ENCODE measurements at regions of chrX and their contacts with region 1.

Region 1: GRCh38 chrX:65723706-65724105 is 56.3 kb downstream of the MSN start:
- DNase-seq: no peak
- H3K4me3 ChIP-seq: peak overlapping the region in 1 of 8 donors; percentile 3
- H3K27ac ChIP-seq: peak overlapping the region; percentile 16 to 72 (median 55)
- H3K4me1 ChIP-seq: peaks cover 15 to 93% (median 55%) of the 10 kb centered on the region in 6 donors
- H3K27me3 ChIP-seq: no peaks in the 10 kb centered on the region
- CTCF ChIP-seq: no peak
- POLR2A ChIP-seq: no peak

Region 2: GRCh38 chrX:65667503-65668376 is 56.0 kb before region 1 on chrX and contains the start of gene MSN:
- intact Hi-C with region 1: loop called (anchors 10 kb)
- DNase-seq: peak; percentile 96
- H3K4me3 ChIP-seq: peak within 1 kb of the TSS; percentile 60 to 87 (median 72)
- H3K27ac ChIP-seq: peak within 1 kb of the TSS; percentile 75 to 97 (median 94)
- H3K4me1 ChIP-seq: peaks cover 0 to 47% (median 31%) of the 10 kb centered on the region in 6 donors
- H3K27me3 ChIP-seq: no peaks in the 10 kb centered on the region
- CTCF ChIP-seq: no peak
- POLR2A ChIP-seq: peak in 1 of 3 donors; percentile 38
- total RNA-seq, gene MSN: 298 to 396 (median 335) TPM

Region 3: DNA sequence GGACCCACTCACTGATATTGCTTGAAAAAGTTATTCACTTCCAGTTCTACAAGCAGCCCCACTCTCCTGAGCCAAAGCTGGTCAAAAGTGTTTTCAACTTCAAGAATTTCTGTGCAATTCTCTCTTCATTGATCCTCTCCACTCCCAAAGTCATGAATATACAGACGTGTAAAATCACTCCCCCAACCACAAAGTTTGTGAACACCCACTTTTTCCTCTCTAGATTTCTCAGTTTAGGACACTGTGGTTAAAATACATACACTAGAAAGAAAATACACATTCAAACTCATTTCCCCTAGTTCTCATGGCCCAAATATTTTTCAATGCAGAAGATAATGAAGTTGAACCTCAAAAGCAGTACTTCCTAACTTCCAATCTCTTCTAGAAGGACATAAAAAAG is 60.0 kb after region 1 on chrX:
- intact Hi-C with region 1: no loop called
- DNase-seq: no peak
- H3K4me3 ChIP-seq: no peak overlapping the region
- H3K27ac ChIP-seq: no peak overlapping the region
- H3K4me1 ChIP-seq: no peaks in the 10 kb centered on the region
- H3K27me3 ChIP-seq: no peaks in the 10 kb centered on the region
- CTCF ChIP-seq: no peak
- POLR2A ChIP-seq: no peak

Region 4: GRCh38 chrX:65866146-65866545 is 142.4 kb after region 1 on chrX:
- intact Hi-C with region 1: no loop called
- DNase-seq: no peak
- H3K4me3 ChIP-seq: no peak overlapping the region
- H3K27ac ChIP-seq: peak overlapping the region in 1 of 8 donors; percentile 23
- H3K4me1 ChIP-seq: no peaks in the 10 kb centered on the region
- H3K27me3 ChIP-seq: no peaks in the 10 kb centered on the region
- CTCF ChIP-seq: no peak
- POLR2A ChIP-seq: no peak

Measured in spleen (tissue), 13 donors.